Activated T-helper 2 cell treated with anti-CD3 and anti-CD28 coated beads, Interferon-gamma antibody, Interleukin-2, Interleukin-4, amounts not matched to agents 10 μg/mL and 5 μg/mL and 100 μg/mL, durations not matched to agents 14 hours and 24 hours and 36 hours (primary cell): ENCODE measurements at regions of chr11 and their contacts with region 1.

Region 1: GRCh38 chr11:76318744-76319384 is 62.1 kb downstream of the THAP12 start:
- DNase-seq: peak; percentile 70
- H3K4me3 Mint-ChIP-seq: no peak overlapping the region
- H3K27ac Mint-ChIP-seq: no peak overlapping the region
- H3K4me1 Mint-ChIP-seq: peaks cover 15% of the 10 kb centered on the region
- H3K27me3 Mint-ChIP-seq: peaks cover 29% of the 10 kb centered on the region

Region 2: DNA sequence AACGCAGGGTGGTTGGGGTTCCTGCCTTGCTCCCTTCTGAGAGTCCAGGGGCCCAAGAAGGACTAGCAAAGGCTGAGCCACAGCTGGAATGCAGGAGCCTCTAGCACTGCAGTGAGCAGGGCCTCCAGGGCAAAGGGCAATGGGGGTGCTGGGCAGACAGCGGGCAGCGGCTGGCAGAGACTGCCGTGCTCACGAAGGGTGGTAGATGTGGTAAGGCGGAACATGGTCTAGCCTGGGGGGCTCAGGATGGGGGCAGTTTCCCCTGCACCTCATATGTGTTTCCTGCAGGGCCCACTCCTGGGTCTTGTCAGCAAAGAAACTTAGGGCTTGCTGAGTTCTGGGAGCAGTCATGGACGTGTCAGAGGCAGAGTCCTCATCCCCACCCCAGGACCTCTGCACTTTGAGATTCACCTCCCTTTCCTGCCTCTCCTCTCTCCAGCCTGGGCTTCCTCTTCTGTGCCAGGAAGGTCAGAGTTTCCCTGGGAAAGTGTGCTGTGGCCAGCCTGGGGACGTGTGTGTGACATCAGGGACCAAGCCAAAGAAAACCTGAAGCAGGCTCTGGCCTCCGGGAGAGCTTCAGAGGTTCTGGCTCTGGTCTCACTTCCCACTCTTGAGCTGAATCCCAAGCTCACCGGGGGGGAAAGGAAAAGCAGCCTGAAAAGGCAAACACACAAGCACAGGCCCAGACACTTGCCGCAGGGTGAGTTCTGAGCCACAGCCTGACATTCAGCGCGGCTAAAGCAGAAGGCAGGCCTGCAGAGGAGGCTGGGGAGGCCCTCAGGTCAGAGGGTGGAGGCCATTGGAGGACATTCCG is 596.8 kb before region 1 on chr11:
- intact Hi-C with region 1: loop called (anchors 2 kb)
- DNase-seq: no peak
- H3K4me3 Mint-ChIP-seq: no peak overlapping the region
- H3K27ac Mint-ChIP-seq: no peak overlapping the region
- H3K4me1 Mint-ChIP-seq: no peaks in the 10 kb centered on the region
- H3K27me3 Mint-ChIP-seq: peaks cover 2% of the 10 kb centered on the region

Region 3: GRCh38 chr11:75896843-75897419 is 421.9 kb before region 1 on chr11:
- intact Hi-C with region 1: loop called (anchors 2 kb)
- DNase-seq: no peak
- H3K4me3 Mint-ChIP-seq: no peak overlapping the region
- H3K27ac Mint-ChIP-seq: no peak overlapping the region
- H3K4me1 Mint-ChIP-seq: peaks cover 25% of the 10 kb centered on the region
- H3K27me3 Mint-ChIP-seq: peaks cover 4% of the 10 kb centered on the region

Region 4: GRCh38 chr11:76369406-76369805 is 50.5 kb after region 1 on chr11:
- intact Hi-C with region 1: no loop called
- DNase-seq: no peak
- H3K4me3 Mint-ChIP-seq: no peak overlapping the region
- H3K27ac Mint-ChIP-seq: no peak overlapping the region
- H3K4me1 Mint-ChIP-seq: peaks cover 40% of the 10 kb centered on the region
- H3K27me3 Mint-ChIP-seq: no peaks in the 10 kb centered on the region

Region 5: GRCh38 chr11:76380967-76381719 is 62.3 kb after region 1 on chr11 and contains the starts of genes GVQW3 and THAP12:
- intact Hi-C with region 1: loop called (anchors 1 kb)
- DNase-seq: peak; percentile 96
- H3K4me3 Mint-ChIP-seq: peak within 1 kb of the TSS; percentile 95
- H3K27ac Mint-ChIP-seq: peak within 1 kb of the TSS; percentile 89
- H3K4me1 Mint-ChIP-seq: peaks cover 49% of the 10 kb centered on the region
- H3K27me3 Mint-ChIP-seq: no peaks in the 10 kb centered on the region
- total RNA-seq, gene GVQW3: 4.3 and 4.4 TPM in 2 replicates
- total RNA-seq, gene THAP12: 63.1 and 66.0 TPM in 2 replicates

Region 6: DNA sequence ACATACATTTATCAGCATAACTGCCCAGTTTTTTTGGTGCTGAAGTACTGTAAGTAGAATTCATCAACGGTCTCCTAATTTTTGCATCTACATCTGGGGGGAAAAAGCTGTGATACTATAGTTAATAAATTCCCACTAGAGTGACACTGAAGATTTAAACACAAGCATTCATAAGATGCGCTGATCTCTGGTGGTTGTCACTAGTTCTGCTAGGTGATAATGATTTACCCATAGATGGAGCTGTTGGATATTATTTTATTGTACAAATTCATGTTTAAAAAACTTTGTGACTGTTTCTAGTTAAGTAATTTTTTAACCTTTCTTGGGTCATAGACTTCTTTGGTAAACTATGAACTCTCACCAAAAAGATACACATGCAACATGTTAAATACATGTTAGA is 232.5 kb after region 1 on chr11:
- intact Hi-C with region 1: no loop called
- DNase-seq: no peak
- H3K4me3 Mint-ChIP-seq: no peak overlapping the region
- H3K27ac Mint-ChIP-seq: no peak overlapping the region
- H3K4me1 Mint-ChIP-seq: peaks cover 7% of the 10 kb centered on the region
- H3K27me3 Mint-ChIP-seq: no peaks in the 10 kb centered on the region